ENCODE measurements at regions of chr15 and their contacts with region 1.

Region 1: GRCh38 chr15:51776952-51777574 is 25.7 kb downstream of the TMOD2 start:
- DNase-seq: peak; percentile 62

Region 2: DNA sequence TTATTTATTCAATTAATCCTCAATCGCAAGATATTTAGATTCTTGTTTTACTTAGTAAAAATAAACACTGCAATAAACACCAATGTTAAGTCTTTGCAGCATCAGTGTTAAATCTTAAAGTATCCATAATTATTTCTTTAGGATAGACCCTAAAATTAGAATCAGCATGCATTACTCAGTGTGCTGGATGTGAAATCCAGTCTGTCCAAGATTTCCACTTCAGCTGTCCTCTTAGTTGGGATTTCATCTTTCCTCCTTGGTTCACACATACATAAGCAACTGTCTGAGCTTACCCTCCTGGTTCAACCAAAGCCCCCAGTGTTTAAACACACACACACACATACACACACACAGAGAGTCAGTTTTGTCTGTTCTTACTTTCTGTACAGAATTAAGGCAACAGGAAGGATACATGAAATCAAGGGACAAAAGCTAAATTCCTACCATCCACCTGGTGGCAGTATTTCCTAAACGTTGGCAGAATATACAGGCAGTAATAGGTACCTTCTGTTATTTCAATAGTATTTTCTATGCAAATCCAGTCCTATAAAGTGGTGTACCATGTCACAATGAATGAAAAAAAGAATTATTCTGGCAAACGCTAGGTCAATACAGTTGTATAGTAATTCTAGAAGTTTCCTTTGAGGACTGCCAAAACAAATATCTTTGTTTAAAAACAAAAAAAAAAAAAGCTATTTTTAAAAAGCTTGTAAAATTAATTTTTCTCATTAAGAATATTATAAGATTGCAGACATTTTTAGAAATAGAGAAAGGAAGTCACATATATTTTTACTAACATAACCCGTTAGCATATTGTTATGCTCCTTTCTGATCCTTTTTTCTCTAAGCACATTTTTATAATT is 127.2 kb before region 1 on chr15:
- CTCF ChIA-PET with region 1: interaction called, 55 read pairs
- POLR2A ChIA-PET with region 1: no interaction called
- DNase-seq: peak; percentile 30